BJ (cell line): ENCODE measurements at regions of chr1 and their contacts with region 1.

Region 1: GRCh38 chr1:145978854-145979759 is 14.6 kb downstream of the POLR3GL start:
- DNase-seq: peak; percentile 100
- H3K4me3 ChIP-seq: peak overlapping the region; percentile 10
- H3K27me3 ChIP-seq: no peaks in the 10 kb centered on the region
- CTCF ChIP-seq: peak; percentile 45

Region 2: DNA sequence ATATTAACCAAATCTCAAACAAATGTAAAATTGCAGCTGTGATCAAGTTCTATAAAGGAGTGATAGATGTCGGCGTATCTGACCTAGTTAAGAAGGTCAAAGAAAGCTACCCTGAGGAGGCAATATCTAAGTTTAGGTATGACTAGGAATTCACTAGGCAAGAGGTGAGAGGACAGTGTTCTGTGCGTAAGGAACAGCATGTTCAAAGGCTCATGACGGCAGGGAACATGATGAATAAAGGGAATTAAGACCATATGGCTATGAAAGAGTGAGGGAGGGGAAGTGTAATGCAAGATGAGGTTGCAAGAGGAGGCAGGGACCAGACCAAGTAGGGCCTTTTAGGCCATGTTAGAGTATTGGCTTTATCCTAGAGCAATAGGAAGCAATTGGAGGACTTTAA is 29.9 kb before region 1 on chr1:
- CTCF ChIA-PET with region 1: no interaction called
- POLR2A ChIA-PET with region 1: no interaction called
- DNase-seq: no peak
- H3K4me3 ChIP-seq: no peak overlapping the region
- H3K27me3 ChIP-seq: no peaks in the 10 kb centered on the region
- CTCF ChIP-seq: no peak

Region 3: GRCh38 chr1:145963995-145964901 is 14.9 kb before region 1 on chr1 and contains the starts of genes ANKRD34A and POLR3GL:
- CTCF ChIA-PET with region 1: interaction called, 32 read pairs
- POLR2A ChIA-PET with region 1: interaction called, 5 read pairs
- DNase-seq: peak; percentile 92
- H3K4me3 ChIP-seq: peak within 1 kb of the TSS; percentile 76
- H3K27me3 ChIP-seq: no peaks in the 10 kb centered on the region
- CTCF ChIP-seq: no peak
- polyA plus RNA-seq, gene ANKRD34A: 1.3 and 1.4 TPM in 2 replicates
- polyA plus RNA-seq, gene POLR3GL: 13.2 and 19.2 TPM in 2 replicates

Region 4: DNA sequence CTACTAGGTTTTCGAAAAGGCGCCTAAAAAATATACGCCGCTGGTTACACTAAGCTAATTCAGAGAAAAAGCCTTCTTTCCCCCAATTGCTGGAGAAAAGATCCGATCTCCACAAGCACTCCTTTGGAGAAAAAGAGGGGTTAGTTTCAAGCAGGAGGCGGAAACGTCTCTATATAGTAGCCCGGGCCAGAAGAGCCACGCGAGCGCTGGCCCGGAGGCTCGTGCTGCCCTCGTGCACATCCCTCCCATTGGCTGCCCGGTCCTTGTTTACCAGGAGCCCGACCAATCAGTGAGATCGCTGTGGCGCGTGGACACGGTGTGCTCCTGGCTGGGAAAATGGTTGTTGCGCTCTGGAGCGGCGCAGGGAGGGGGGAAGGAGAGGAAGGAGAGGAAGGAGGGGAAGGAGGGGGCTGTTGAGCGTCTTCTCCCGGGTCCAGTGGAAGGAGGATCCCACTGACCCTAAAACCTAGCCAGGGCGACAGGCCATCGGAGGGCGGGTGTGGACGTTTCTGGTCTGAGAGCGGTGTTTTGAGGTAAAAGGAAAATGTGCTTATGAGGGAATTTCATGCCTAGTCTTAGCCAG is 17.4 kb after region 1 on chr1 and contains the start of gene TXNIP:
- CTCF ChIA-PET with region 1: interaction called, 117 read pairs
- POLR2A ChIA-PET with region 1: interaction called, 9 read pairs
- DNase-seq: peak; percentile 86
- H3K4me3 ChIP-seq: peak within 1 kb of the TSS; percentile 56
- H3K27me3 ChIP-seq: no peaks in the 10 kb centered on the region
- CTCF ChIP-seq: no peak
- polyA plus RNA-seq, gene TXNIP: 212 and 258 TPM in 2 replicates

Region 5: DNA sequence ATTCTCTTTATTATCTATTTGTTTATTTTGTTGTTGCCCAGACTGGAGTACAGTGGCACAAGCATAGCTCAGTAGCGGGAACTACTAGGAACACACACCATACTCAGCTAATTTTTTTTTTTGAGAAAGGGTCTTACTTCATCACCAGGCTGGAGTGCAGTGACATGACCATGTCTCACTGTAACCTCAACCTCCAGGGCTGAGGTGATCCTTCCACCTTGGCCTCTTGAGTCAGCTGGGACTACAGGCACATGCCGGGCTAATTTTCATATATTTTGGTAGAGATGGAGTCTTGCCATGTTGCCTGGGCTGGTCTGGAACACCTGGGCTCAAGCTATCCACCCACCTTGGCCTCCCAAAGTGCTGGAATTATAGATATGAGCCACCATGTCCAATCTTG is 22.6 kb after region 1 on chr1:
- CTCF ChIA-PET with region 1: interaction called, 171 read pairs
- POLR2A ChIA-PET with region 1: interaction called, 3 read pairs
- DNase-seq: no peak
- H3K4me3 ChIP-seq: no peak overlapping the region
- H3K27me3 ChIP-seq: no peaks in the 10 kb centered on the region
- CTCF ChIP-seq: no peak

Region 6: DNA sequence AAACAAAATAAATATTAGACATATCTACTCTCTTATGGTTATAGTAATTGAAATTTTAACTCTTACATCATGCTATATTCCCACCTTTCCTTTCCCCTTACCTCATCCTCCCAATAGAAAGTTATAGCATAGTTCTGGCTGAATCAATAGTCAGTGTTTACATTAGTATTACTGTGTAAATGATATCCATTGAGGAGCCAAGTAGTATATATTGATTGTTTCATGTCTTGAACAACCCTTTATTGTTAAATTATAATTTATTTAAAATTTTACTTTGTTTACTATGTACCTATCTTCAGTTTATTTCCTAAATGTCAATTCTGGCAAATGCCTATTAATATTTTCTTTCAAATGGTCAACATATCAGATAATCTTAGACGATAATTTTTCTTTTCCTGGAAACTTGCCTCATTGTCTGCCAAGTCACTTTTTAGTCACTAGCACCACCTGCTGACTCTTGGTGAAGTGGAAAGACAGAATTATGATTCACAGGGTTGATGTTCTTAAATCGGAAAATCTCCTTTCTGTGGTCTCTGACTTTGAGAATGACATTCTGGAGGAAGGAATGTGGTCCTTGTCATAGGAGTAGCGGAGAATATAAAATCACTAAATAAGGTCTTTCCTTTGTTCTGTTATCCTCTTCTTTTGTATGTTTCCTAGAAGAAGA is 33.8 kb after region 1 on chr1:
- CTCF ChIA-PET with region 1: interaction called, 171 read pairs
- POLR2A ChIA-PET with region 1: no interaction called
- DNase-seq: no peak
- H3K4me3 ChIP-seq: no peak overlapping the region
- H3K27me3 ChIP-seq: no peaks in the 10 kb centered on the region
- CTCF ChIP-seq: peak; percentile 73

Region 7: GRCh38 chr1:146019231-146020057 is 40.3 kb after region 1 on chr1:
- CTCF ChIA-PET with region 1: interaction called, 171 read pairs
- POLR2A ChIA-PET with region 1: no interaction called
- DNase-seq: no peak
- H3K4me3 ChIP-seq: no peak overlapping the region
- H3K27me3 ChIP-seq: peaks cover 3% of the 10 kb centered on the region; the same call in 1 of the 2 replicates
- CTCF ChIP-seq: no peak

Region 8: DNA sequence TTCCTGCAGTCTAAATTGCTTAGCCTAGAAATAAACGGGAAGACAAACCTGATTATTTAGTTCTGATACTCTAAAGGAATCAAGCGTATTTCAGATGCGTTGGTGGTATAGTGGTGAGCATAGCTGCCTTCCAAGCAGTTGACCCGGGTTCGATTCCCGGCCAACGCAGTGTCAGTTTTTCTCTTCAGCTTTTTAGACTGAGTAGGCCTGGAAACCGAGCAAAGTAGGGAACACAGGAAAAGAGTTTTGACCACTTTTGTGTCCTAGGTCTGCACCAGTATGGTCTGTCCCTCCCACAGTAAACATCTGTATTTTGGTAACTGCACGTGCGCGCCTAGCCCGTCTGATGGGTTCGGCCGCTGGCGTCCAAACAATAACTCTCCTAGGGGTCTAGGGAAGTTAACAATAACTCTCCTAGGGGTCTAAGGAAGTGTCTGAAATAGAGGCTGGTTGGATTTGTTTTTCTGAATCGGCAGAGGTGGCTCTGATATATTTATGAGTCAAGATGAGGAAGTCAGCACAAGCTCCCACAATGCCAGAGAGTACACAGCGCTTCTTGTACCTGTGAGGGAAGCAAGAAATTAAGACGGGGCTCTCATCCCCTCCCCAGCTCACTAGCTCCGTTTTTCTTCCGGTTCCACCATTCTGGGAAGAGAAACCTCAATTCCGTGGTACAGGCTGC is 58.0 kb after region 1 on chr1:
- CTCF ChIA-PET with region 1: interaction called, 10 read pairs
- POLR2A ChIA-PET with region 1: interaction called, 18 read pairs
- DNase-seq: no peak
- H3K4me3 ChIP-seq: peak overlapping the region; percentile 50
- H3K27me3 ChIP-seq: no peaks in the 10 kb centered on the region
- CTCF ChIP-seq: no peak